Activated CD4-positive, alpha-beta memory T cell treated with anti-CD3 and anti-CD28 coated beads, Interleukin-2, amount 10 ng/mL, durations not matched to agents 7 days and 5 days (primary cell): ENCODE measurements at regions of chr2 and their contacts with region 1.

Region 1: GRCh38 chr2:168346725-168347477 is 99.5 kb upstream of the STK39 start:
- DNase-seq: peak; percentile 70
- H3K4me3 Mint-ChIP-seq: peak overlapping the region; percentile 67
- H3K27ac Mint-ChIP-seq: no peak overlapping the region
- H3K4me1 Mint-ChIP-seq: peaks cover 5% of the 10 kb centered on the region
- H3K27me3 Mint-ChIP-seq: peaks cover 5% of the 10 kb centered on the region

Region 2: GRCh38 chr2:168278424-168278888 is 68.4 kb before region 1 on chr2:
- CTCF ChIA-PET with region 1: no interaction called
- POLR2A ChIA-PET with region 1: no interaction called
- DNase-seq: no peak
- H3K4me3 Mint-ChIP-seq: no peak overlapping the region
- H3K27ac Mint-ChIP-seq: no peak overlapping the region
- H3K4me1 Mint-ChIP-seq: no peaks in the 10 kb centered on the region
- H3K27me3 Mint-ChIP-seq: peaks cover 4% of the 10 kb centered on the region

Region 3: GRCh38 chr2:168336864-168337263 is 10.0 kb before region 1 on chr2:
- CTCF ChIA-PET with region 1: interaction called, 11 read pairs
- POLR2A ChIA-PET with region 1: interaction called, 3 read pairs
- DNase-seq: peak; percentile 62
- H3K4me3 Mint-ChIP-seq: no peak overlapping the region
- H3K27ac Mint-ChIP-seq: no peak overlapping the region
- H3K4me1 Mint-ChIP-seq: peaks cover 5% of the 10 kb centered on the region
- H3K27me3 Mint-ChIP-seq: peaks cover 6% of the 10 kb centered on the region

Region 4: DNA sequence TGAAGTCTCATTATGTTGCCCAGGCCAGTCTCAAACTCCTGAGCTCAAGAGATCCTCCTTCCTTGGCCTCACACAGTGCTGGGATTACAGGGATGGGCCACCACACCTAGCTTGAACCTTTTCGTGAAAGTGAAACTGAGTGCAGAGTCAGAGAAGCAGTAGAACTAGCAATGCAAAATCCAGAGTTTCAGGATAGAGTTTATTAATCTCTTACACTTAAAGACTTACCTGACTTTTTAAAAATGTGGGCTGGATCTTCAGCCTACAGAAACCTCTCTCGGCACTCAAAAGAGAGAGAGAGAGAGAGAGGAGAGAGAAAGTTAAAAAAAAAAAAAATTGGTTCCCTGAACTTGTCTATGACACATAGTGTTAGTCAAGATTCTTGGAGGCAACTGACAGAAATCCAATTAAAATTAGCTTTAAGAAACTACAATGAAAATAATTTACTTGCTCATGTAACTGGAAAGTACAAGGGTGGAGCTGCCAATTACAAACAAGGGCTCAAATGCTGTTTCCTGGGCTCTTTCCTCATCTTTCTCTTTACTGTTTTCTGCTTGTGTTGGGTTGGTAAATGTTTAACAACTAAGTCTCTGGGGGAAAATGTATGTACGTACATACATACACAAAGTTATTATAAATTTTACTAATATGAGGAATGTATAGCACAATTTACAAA is 11.0 kb after region 1 on chr2:
- CTCF ChIA-PET with region 1: interaction called, 16 read pairs
- POLR2A ChIA-PET with region 1: no interaction called
- DNase-seq: no peak
- H3K4me3 Mint-ChIP-seq: no peak overlapping the region
- H3K27ac Mint-ChIP-seq: no peak overlapping the region
- H3K4me1 Mint-ChIP-seq: peaks cover 17% of the 10 kb centered on the region
- H3K27me3 Mint-ChIP-seq: peaks cover 5% of the 10 kb centered on the region

Region 5: GRCh38 chr2:168392024-168392423 is 45.1 kb after region 1 on chr2:
- CTCF ChIA-PET with region 1: no interaction called
- POLR2A ChIA-PET with region 1: no interaction called
- DNase-seq: no peak
- H3K4me3 Mint-ChIP-seq: no peak overlapping the region
- H3K27ac Mint-ChIP-seq: no peak overlapping the region
- H3K4me1 Mint-ChIP-seq: no peaks in the 10 kb centered on the region
- H3K27me3 Mint-ChIP-seq: peaks cover 10% of the 10 kb centered on the region

Region 6: GRCh38 chr2:168515502-168515901 is 168.6 kb after region 1 on chr2:
- CTCF ChIA-PET with region 1: no interaction called
- POLR2A ChIA-PET with region 1: no interaction called
- DNase-seq: no peak
- H3K4me3 Mint-ChIP-seq: no peak overlapping the region
- H3K27ac Mint-ChIP-seq: no peak overlapping the region
- H3K4me1 Mint-ChIP-seq: no peaks in the 10 kb centered on the region
- H3K27me3 Mint-ChIP-seq: no peaks in the 10 kb centered on the region

Region 7: DNA sequence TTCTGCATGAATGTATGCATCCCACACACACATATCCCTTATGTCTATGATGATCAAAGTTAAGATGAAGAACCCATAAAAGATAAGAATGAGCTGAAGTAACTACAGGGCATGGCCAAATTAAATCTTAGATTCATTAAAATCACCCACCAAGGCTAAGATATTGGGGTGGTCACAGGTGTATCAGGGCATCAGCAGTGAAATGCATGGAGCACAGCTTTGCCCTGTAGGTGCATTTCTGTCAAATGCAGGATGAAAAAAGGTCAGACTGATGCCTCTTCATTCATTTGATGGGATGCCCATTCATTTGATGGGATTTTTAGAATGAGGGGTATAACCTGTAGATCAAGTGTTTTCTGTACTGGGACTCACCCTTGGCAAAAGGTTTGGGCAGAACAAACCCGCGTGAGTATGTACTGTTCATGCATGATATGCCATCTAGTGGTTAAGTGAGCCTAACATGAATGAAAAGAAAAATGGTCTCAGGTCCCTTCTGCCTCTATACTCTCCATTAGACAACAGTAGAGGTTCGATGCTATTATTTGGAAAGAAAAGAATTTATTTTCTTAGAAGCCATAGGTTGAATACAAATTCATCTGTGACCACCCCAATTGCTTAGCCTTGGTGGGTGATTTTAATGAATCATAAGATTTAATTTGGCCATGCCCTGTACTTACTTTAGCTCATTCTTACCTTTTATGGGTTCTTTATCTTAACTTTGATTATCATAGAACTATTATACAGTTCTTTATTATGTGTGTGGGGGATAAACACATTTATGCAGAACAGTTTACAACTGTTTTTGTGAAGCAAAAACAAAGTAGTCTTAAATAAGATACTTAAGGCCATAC is 412.3 kb after region 1 on chr2:
- CTCF ChIA-PET with region 1: interaction called, 31 read pairs
- POLR2A ChIA-PET with region 1: no interaction called
- DNase-seq: peak; percentile 20
- H3K4me3 Mint-ChIP-seq: no peak overlapping the region
- H3K27ac Mint-ChIP-seq: no peak overlapping the region
- H3K4me1 Mint-ChIP-seq: peaks cover 17% of the 10 kb centered on the region
- H3K27me3 Mint-ChIP-seq: no peaks in the 10 kb centered on the region